ENCODE measurements at regions of chr5 and their contacts with region 1.

Region 1: DNA sequence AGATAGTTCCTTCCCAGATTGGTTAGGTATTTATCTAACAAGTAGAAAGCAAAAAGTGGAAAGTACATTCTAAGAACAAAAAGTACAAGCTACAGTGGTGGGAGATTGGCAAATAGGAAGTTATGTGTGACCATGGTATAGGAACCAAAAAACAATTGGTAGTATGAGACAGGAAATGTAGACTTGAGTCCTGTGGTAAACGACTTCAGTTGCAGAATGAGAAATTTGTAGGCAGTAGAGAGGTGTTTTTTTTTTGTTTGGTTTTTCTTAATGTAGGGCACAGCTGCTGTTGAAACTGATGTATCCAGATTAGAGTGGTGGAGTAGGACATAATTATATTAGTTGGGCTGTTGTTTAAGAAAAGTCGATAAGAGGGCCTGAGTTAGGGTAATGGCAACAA is 72.0 kb downstream of the CCNH start:
- DNase-seq: peak in 2 of 9 experiments; percentile 59 to 70
- ATAC-seq: peak; percentile 96
- H3K4me3 ChIP-seq: peak overlapping the region in 1 of 2 experiments; percentile 23
- H3K4me3 Mint-ChIP-seq: peak overlapping the region; percentile 73
- H3K27ac ChIP-seq: peak overlapping the region; percentile 45 to 74
- H3K27ac Mint-ChIP-seq: peak overlapping the region; percentile 90
- H3K4me1 ChIP-seq: peaks cover 17% of the 10 kb centered on the region
- H3K4me1 Mint-ChIP-seq: peaks cover 29% of the 10 kb centered on the region
- H3K27me3 ChIP-seq: no peaks in the 10 kb centered on the region
- H3K27me3 Mint-ChIP-seq: no peaks in the 10 kb centered on the region
- CTCF ChIP-seq: no peak

Region 2: GRCh38 chr5:87277279-87277835 is 63.4 kb before region 1 on chr5:
- CTCF ChIA-PET with region 1: no interaction called
- POLR2A ChIA-PET with region 1: no interaction called
- intact Hi-C with region 1: loop called in 1 of 2 experiments (anchors 5 kb)
- DNase-seq: no peak
- ATAC-seq: no peak
- H3K4me3 ChIP-seq: no peak overlapping the region
- H3K4me3 Mint-ChIP-seq: no peak overlapping the region
- H3K27ac ChIP-seq: no peak overlapping the region
- H3K27ac Mint-ChIP-seq: peak overlapping the region; percentile 45
- H3K4me1 ChIP-seq: peaks cover 12% of the 10 kb centered on the region
- H3K4me1 Mint-ChIP-seq: peaks cover 71% of the 10 kb centered on the region
- H3K27me3 ChIP-seq: no peaks in the 10 kb centered on the region
- H3K27me3 Mint-ChIP-seq: no peaks in the 10 kb centered on the region
- CTCF ChIP-seq: no peak

Region 3: DNA sequence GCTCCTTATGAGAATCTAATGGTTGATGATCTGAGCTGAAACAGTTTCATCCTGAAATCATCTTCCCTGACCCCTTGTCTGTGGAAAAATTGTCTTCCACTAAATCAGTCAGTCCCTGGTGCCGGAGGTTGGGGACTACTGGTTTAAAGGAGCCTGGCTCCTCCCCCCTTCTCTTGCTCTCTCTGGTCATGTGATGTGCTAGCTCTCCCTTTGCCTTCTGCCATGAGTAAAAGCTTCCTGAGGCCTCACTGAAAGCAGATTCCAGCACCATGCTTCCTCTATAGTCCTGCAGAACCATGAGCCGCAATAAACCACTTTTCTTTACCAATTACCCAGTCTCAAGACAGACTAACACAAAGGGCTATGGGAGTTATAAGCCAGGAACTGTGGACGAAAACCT is 18.3 kb before region 1 on chr5:
- CTCF ChIA-PET with region 1: no interaction called
- POLR2A ChIA-PET with region 1: no interaction called
- intact Hi-C with region 1: no loop called
- DNase-seq: no peak
- ATAC-seq: no peak
- H3K4me3 ChIP-seq: no peak overlapping the region
- H3K4me3 Mint-ChIP-seq: no peak overlapping the region
- H3K27ac ChIP-seq: no peak overlapping the region
- H3K27ac Mint-ChIP-seq: no peak overlapping the region
- H3K4me1 ChIP-seq: peaks cover 4% of the 10 kb centered on the region
- H3K4me1 Mint-ChIP-seq: peaks cover 62% of the 10 kb centered on the region
- H3K27me3 ChIP-seq: no peaks in the 10 kb centered on the region
- H3K27me3 Mint-ChIP-seq: no peaks in the 10 kb centered on the region
- CTCF ChIP-seq: no peak

Region 4: DNA sequence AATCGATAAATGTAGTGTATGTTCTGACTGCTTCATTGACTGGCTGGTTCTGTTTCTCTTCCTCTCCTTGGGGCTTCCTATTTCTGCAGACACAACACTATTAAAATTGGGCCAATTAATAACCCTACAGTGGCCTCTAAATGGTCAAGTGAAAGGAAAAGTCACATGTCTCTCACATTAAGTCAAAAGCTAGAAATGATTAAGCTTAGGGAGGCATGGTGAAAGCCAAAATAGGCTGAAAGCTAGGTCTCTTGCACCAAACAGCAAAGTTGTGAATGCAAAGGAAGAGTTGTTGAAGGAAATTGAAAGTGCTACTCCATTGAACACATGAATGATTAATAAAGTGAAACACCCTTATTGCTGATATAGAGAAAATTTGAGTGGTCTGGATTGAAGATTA is 13.8 kb after region 1 on chr5:
- CTCF ChIA-PET with region 1: no interaction called
- POLR2A ChIA-PET with region 1: no interaction called
- intact Hi-C with region 1: loop called in 1 of 2 experiments (anchors 1 kb)
- DNase-seq: no peak
- ATAC-seq: no peak
- H3K4me3 ChIP-seq: no peak overlapping the region
- H3K4me3 Mint-ChIP-seq: no peak overlapping the region
- H3K27ac ChIP-seq: no peak overlapping the region
- H3K27ac Mint-ChIP-seq: peak overlapping the region; percentile 29
- H3K4me1 ChIP-seq: no peaks in the 10 kb centered on the region
- H3K4me1 Mint-ChIP-seq: peaks cover 17% of the 10 kb centered on the region
- H3K27me3 ChIP-seq: no peaks in the 10 kb centered on the region
- H3K27me3 Mint-ChIP-seq: no peaks in the 10 kb centered on the region
- CTCF ChIP-seq: no peak

Region 5: DNA sequence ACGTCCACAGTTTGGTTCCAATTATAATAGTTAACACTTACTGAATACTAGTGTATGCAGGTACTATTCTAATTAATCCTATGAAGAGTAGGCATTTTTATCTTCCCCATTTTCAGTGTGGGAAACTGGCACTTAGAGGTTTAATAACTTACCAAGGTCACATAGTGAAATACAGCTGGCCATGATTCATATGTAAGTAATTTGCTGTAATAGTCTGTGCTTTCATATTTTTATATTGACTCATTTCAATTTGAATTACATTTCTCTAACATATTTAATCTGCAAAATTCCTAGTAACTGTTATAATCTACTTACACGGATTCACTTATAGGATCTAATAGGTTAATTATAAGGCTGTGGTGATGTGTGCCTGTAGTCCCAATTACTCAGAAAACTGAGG is 52.6 kb after region 1 on chr5:
- CTCF ChIA-PET with region 1: no interaction called
- POLR2A ChIA-PET with region 1: no interaction called
- intact Hi-C with region 1: loop called in 1 of 2 experiments (anchors 5 kb)
- DNase-seq: no peak
- ATAC-seq: no peak
- H3K4me3 ChIP-seq: no peak overlapping the region
- H3K4me3 Mint-ChIP-seq: no peak overlapping the region
- H3K27ac ChIP-seq: no peak overlapping the region
- H3K27ac Mint-ChIP-seq: no peak overlapping the region
- H3K4me1 ChIP-seq: no peaks in the 10 kb centered on the region
- H3K4me1 Mint-ChIP-seq: peaks cover 29% of the 10 kb centered on the region
- H3K27me3 ChIP-seq: no peaks in the 10 kb centered on the region
- H3K27me3 Mint-ChIP-seq: no peaks in the 10 kb centered on the region
- CTCF ChIP-seq: no peak

Region 6: GRCh38 chr5:87457706-87458105 is 117.0 kb after region 1 on chr5:
- CTCF ChIA-PET with region 1: no interaction called
- POLR2A ChIA-PET with region 1: no interaction called
- intact Hi-C with region 1: no loop called
- DNase-seq: no peak
- ATAC-seq: no peak
- H3K4me3 ChIP-seq: no peak overlapping the region
- H3K4me3 Mint-ChIP-seq: no peak overlapping the region
- H3K27ac ChIP-seq: no peak overlapping the region
- H3K27ac Mint-ChIP-seq: no peak overlapping the region
- H3K4me1 ChIP-seq: no peaks in the 10 kb centered on the region
- H3K4me1 Mint-ChIP-seq: no peaks in the 10 kb centered on the region
- H3K27me3 ChIP-seq: peaks cover 0 to 5% of the 10 kb centered on the region in 2 experiments
- H3K27me3 Mint-ChIP-seq: peaks cover 25% of the 10 kb centered on the region
- CTCF ChIP-seq: no peak

Measured in CD8-positive, alpha-beta T cell (primary cell).